Activated CD4-positive, alpha-beta memory T cell treated with anti-CD3 and anti-CD28 coated beads for 36 hours (primary cell): ENCODE measurements at regions of chr16 and their contacts with region 1.

Region 1: GRCh38 chr16:87636072-87636684 is 33.9 kb downstream of the JPH3 start:
- DNase-seq: peak; percentile 91
- H3K4me3 Mint-ChIP-seq: peak overlapping the region; percentile 68
- H3K27ac Mint-ChIP-seq: no peak overlapping the region
- H3K4me1 Mint-ChIP-seq: peaks cover 11% of the 10 kb centered on the region
- H3K27me3 Mint-ChIP-seq: peaks cover 4% of the 10 kb centered on the region

Region 2: GRCh38 chr16:87203060-87203656 is 433.0 kb before region 1 on chr16:
- CTCF ChIA-PET with region 1: interaction called, 17 read pairs
- POLR2A ChIA-PET with region 1: no interaction called
- intact Hi-C with region 1: no loop called
- DNase-seq: peak; percentile 66
- H3K4me3 Mint-ChIP-seq: no peak overlapping the region
- H3K27ac Mint-ChIP-seq: no peak overlapping the region
- H3K4me1 Mint-ChIP-seq: peaks cover 2% of the 10 kb centered on the region
- H3K27me3 Mint-ChIP-seq: peaks cover 10% of the 10 kb centered on the region

Region 3: GRCh38 chr16:87387942-87388817 is 248.0 kb before region 1 on chr16:
- CTCF ChIA-PET with region 1: interaction called, 33 read pairs
- POLR2A ChIA-PET with region 1: interaction called, 3 read pairs
- intact Hi-C with region 1: loop called (anchors 1 kb)
- DNase-seq: peak; percentile 94
- H3K4me3 Mint-ChIP-seq: peak overlapping the region; percentile 57
- H3K27ac Mint-ChIP-seq: peak overlapping the region; percentile 96
- H3K4me1 Mint-ChIP-seq: peaks cover 52% of the 10 kb centered on the region
- H3K27me3 Mint-ChIP-seq: peaks cover 2% of the 10 kb centered on the region

Region 4: GRCh38 chr16:87435372-87436224 is 200.6 kb before region 1 on chr16:
- CTCF ChIA-PET with region 1: interaction called, 11 read pairs
- POLR2A ChIA-PET with region 1: no interaction called
- intact Hi-C with region 1: no loop called
- DNase-seq: no peak
- H3K4me3 Mint-ChIP-seq: peak overlapping the region; percentile 26
- H3K27ac Mint-ChIP-seq: no peak overlapping the region
- H3K4me1 Mint-ChIP-seq: peaks cover 20% of the 10 kb centered on the region
- H3K27me3 Mint-ChIP-seq: no peaks in the 10 kb centered on the region

Region 5: GRCh38 chr16:87556941-87557459 is 79.2 kb before region 1 on chr16:
- CTCF ChIA-PET with region 1: interaction called, 28 read pairs
- POLR2A ChIA-PET with region 1: no interaction called
- intact Hi-C with region 1: no loop called
- DNase-seq: no peak
- H3K4me3 Mint-ChIP-seq: no peak overlapping the region
- H3K27ac Mint-ChIP-seq: no peak overlapping the region
- H3K4me1 Mint-ChIP-seq: no peaks in the 10 kb centered on the region
- H3K27me3 Mint-ChIP-seq: peaks cover 7% of the 10 kb centered on the region

Region 6: DNA sequence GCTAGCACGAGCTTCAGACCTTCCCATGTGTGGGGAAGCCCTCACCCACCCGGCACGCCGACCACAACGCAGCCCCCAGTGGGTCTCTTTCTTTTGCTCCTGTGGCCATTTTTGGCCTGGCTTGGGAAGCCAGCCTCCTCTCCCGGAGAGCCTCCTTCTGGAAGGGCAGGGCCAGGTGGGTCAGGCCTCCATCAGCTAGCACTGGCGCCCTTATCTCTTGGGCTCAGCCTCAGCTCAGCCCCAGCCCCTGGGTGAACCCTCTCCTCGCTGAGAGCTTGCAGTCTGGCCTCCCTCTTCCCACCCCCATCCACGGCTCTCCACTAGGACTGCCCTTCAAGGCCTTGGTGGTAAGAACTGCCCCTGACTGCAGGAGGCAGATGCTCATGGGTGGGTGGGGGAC is 48.5 kb before region 1 on chr16:
- CTCF ChIA-PET with region 1: interaction called, 57 read pairs
- POLR2A ChIA-PET with region 1: no interaction called
- intact Hi-C with region 1: loop called (anchors 1 kb)
- DNase-seq: no peak
- H3K4me3 Mint-ChIP-seq: no peak overlapping the region
- H3K27ac Mint-ChIP-seq: no peak overlapping the region
- H3K4me1 Mint-ChIP-seq: no peaks in the 10 kb centered on the region
- H3K27me3 Mint-ChIP-seq: peaks cover 32% of the 10 kb centered on the region

Region 7: GRCh38 chr16:87765776-87766484 is 129.8 kb after region 1 on chr16 and contains the start of gene KLHDC4:
- CTCF ChIA-PET with region 1: interaction called, 7 read pairs
- POLR2A ChIA-PET with region 1: interaction called, 3 read pairs
- intact Hi-C with region 1: loop called (anchors 5 kb)
- DNase-seq: peak; percentile 94
- H3K4me3 Mint-ChIP-seq: peak within 1 kb of the TSS; percentile 97
- H3K27ac Mint-ChIP-seq: peak within 1 kb of the TSS; percentile 92
- H3K4me1 Mint-ChIP-seq: peaks cover 38% of the 10 kb centered on the region
- H3K27me3 Mint-ChIP-seq: no peaks in the 10 kb centered on the region
- total RNA-seq, gene KLHDC4: 65.9 to 70.2 TPM